ENCODE measurements at regions of chr12 and their contacts with region 1.

Region 1: DNA sequence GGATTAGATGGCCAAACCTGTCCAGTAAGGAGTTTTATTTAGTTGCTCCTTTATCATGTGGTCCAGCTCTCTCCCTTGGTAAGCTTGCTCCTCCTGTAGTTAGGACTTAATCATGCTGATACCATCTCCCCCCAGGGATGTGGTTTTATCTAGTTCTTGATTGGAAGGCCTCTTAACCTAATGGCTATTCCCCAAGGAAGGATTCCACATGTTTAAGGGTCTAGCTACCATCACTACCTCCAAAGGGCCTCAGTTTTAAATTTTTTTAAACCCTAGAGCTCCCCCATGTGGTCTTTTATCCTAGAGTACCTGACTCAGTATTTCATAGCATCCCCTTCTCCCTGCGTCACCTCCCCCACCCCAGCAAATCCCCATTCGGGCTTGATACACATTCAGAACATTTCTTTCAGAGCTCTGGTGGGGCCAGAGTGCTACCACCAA is 22.5 kb downstream of the MAP3K12 start:
- DNase-seq: no peak
- H3K4me3 Mint-ChIP-seq: no peak overlapping the region
- H3K27ac Mint-ChIP-seq: no peak overlapping the region
- H3K4me1 Mint-ChIP-seq: peaks cover 18% of the 10 kb centered on the region
- H3K27me3 Mint-ChIP-seq: no peaks in the 10 kb centered on the region
- CTCF ChIP-seq: peak; percentile 21

Region 2: GRCh38 chr12:52805000-52805399 is 671.8 kb before region 1 on chr12:
- CTCF ChIA-PET with region 1: no interaction called
- POLR2A ChIA-PET with region 1: no interaction called
- intact Hi-C with region 1: no loop called
- DNase-seq: no peak
- H3K4me3 Mint-ChIP-seq: no peak overlapping the region
- H3K27ac Mint-ChIP-seq: no peak overlapping the region
- H3K4me1 Mint-ChIP-seq: peaks cover 3% of the 10 kb centered on the region
- H3K27me3 Mint-ChIP-seq: peaks cover 48% of the 10 kb centered on the region
- CTCF ChIP-seq: no peak

Region 3: DNA sequence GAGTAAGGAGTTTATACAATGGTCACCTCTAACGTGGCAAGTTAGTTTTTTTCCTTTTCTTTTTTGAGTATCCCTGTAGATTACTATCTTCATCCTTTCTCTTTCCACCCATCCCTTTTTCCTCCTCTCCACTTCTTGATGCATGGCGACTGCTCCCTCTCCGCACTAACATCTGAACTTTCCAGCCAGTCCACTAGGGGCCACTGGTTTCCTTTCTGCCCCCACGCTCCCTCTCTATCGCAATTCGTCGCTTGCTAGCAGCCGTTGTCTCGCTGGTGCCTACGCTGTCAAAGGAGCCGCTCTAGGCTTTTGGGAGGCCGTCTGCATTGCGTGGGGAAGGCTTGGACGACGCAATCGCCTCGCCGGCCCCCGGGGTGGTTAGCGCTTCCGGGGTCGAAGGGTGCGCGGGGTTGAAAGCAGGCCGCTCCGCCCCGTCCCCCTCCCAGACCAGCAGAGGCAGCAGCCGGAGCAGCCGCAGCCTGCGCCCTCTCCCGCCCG is 25.1 kb before region 1 on chr12 and contains the start of gene PCBP2:
- CTCF ChIA-PET with region 1: interaction called, 8 read pairs
- POLR2A ChIA-PET with region 1: interaction called, 14 read pairs
- intact Hi-C with region 1: no loop called
- DNase-seq: peak; percentile 99
- H3K4me3 Mint-ChIP-seq: peak within 1 kb of the TSS; percentile 92
- H3K27ac Mint-ChIP-seq: peak within 1 kb of the TSS; percentile 100
- H3K4me1 Mint-ChIP-seq: peaks cover 30% of the 10 kb centered on the region
- H3K27me3 Mint-ChIP-seq: no peaks in the 10 kb centered on the region
- CTCF ChIP-seq: peak; percentile 56
- total RNA-seq, gene PCBP2: 994 and 1,037 TPM in 2 replicates

Region 4: GRCh38 chr12:53465679-53466078 is 11.1 kb before region 1 on chr12:
- CTCF ChIA-PET with region 1: interaction called, 5 read pairs
- POLR2A ChIA-PET with region 1: interaction called, 25 read pairs
- intact Hi-C with region 1: no loop called
- DNase-seq: no peak
- H3K4me3 Mint-ChIP-seq: no peak overlapping the region
- H3K27ac Mint-ChIP-seq: no peak overlapping the region
- H3K4me1 Mint-ChIP-seq: peaks cover 34% of the 10 kb centered on the region
- H3K27me3 Mint-ChIP-seq: no peaks in the 10 kb centered on the region
- CTCF ChIP-seq: no peak

Region 5: GRCh38 chr12:53492830-53493611 is 16.2 kb after region 1 on chr12:
- CTCF ChIA-PET with region 1: interaction called, 10 read pairs
- POLR2A ChIA-PET with region 1: interaction called, 53 read pairs
- intact Hi-C with region 1: no loop called
- DNase-seq: peak; percentile 84
- H3K4me3 Mint-ChIP-seq: peak overlapping the region; percentile 76
- H3K27ac Mint-ChIP-seq: peak overlapping the region; percentile 32
- H3K4me1 Mint-ChIP-seq: peaks cover 29% of the 10 kb centered on the region
- H3K27me3 Mint-ChIP-seq: no peaks in the 10 kb centered on the region
- CTCF ChIP-seq: no peak

Region 6: DNA sequence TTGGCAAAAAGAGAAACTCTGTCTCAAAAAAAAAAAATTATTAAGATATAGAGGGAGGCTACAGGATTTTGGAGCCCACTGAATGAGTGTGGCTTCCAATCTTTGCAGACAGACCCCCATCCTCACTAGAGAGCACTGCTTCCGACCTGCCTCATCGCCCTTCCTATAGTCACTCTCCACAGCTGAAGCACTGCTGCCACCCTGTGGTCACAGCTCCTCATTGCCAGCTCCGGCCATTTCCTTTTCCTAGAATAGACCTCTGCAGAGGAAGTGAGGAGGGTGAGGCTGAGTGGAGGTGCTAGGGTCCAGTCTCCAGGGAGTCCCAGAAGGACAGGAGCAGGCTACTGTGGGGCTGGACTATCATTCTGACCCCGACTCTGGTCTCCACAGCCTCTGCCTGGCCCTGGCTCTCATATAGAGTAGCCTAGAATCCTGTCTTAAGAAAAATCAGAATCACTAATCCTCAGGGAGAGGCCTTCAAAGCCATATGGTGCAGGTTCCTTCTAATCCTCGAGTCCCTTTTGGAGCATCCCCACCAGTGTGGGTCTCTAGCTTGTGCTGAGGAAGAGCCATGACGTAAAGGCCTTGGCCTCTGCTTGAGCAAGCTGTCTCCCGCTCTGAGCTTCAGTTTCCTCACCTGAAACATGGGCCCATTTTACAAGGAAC is 31.9 kb after region 1 on chr12:
- CTCF ChIA-PET with region 1: interaction called, 23 read pairs
- POLR2A ChIA-PET with region 1: interaction called, 7 read pairs
- intact Hi-C with region 1: no loop called
- DNase-seq: peak; percentile 85
- H3K4me3 Mint-ChIP-seq: no peak overlapping the region
- H3K27ac Mint-ChIP-seq: no peak overlapping the region
- H3K4me1 Mint-ChIP-seq: peaks cover 5% of the 10 kb centered on the region
- H3K27me3 Mint-ChIP-seq: no peaks in the 10 kb centered on the region
- CTCF ChIP-seq: peak; percentile 88

Measured in MCF 10A (cell line).